Naive thymus-derived CD4-positive, alpha-beta T cell (primary cell): ENCODE measurements at regions of chr3 and their contacts with region 1.

Region 1: DNA sequence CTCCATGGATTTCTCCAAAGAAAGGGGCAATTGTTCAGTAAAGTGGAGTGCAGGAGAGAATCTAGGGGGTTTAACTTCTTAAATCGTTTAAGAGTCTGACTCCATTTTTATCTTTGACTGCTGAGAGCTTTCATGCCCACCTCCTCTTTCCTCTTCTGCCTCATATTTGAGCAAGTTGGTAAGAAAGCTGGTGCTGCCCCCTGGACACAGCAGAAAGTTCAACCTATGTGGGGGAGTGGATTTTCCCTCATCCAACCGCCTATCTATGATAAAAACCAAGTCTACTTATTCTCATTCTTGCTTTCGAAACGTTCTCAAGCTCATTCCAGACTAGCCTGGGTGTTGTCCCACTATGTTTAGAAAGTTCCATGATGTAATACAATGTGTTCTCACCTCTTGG is 26.0 kb downstream of the HHLA2 start:
- DNase-seq: peak in 5 of 9 donors; percentile 16 to 40 (median 36)
- ATAC-seq: no peak
- H3K4me3 ChIP-seq: no peak overlapping the region
- H3K4me3 Mint-ChIP-seq: no peak overlapping the region
- H3K27ac ChIP-seq: no peak overlapping the region
- H3K27ac Mint-ChIP-seq: no peak overlapping the region
- H3K4me1 ChIP-seq: no peaks in the 10 kb centered on the region
- H3K4me1 Mint-ChIP-seq: peaks cover 0 to 21% (median 5%) of the 10 kb centered on the region in 7 donors
- H3K27me3 ChIP-seq: no peaks in the 10 kb centered on the region
- H3K27me3 Mint-ChIP-seq: no peaks in the 10 kb centered on the region

Region 2: GRCh38 chr3:107753480-107753879 is 568.9 kb before region 1 on chr3:
- CTCF ChIA-PET with region 1: no interaction called
- POLR2A ChIA-PET with region 1: no interaction called
- intact Hi-C with region 1: loop called in 1 of 2 experiments (anchors 10 kb)
- DNase-seq: peak in 3 of 9 donors; percentile 4 to 23 (median 9)
- ATAC-seq: peak; percentile 50
- H3K4me3 ChIP-seq: no peak overlapping the region
- H3K4me3 Mint-ChIP-seq: no peak overlapping the region
- H3K27ac ChIP-seq: no peak overlapping the region
- H3K27ac Mint-ChIP-seq: peak overlapping the region in 1 of 9 donors; percentile 28
- H3K4me1 ChIP-seq: no peaks in the 10 kb centered on the region
- H3K4me1 Mint-ChIP-seq: peaks cover 0 to 11% (median 0%) of the 10 kb centered on the region in 7 donors
- H3K27me3 ChIP-seq: no peaks in the 10 kb centered on the region
- H3K27me3 Mint-ChIP-seq: no peaks in the 10 kb centered on the region

Region 3: GRCh38 chr3:107938143-107938542 is 384.2 kb before region 1 on chr3:
- CTCF ChIA-PET with region 1: no interaction called
- POLR2A ChIA-PET with region 1: no interaction called
- intact Hi-C with region 1: loop called in 1 of 2 experiments (anchors 1 kb)
- DNase-seq: peak in 4 of 9 donors; percentile 6 to 19 (median 8)
- ATAC-seq: no peak
- H3K4me3 ChIP-seq: no peak overlapping the region
- H3K4me3 Mint-ChIP-seq: no peak overlapping the region
- H3K27ac ChIP-seq: no peak overlapping the region
- H3K27ac Mint-ChIP-seq: no peak overlapping the region
- H3K4me1 ChIP-seq: peaks cover 0 to 4% of the 10 kb centered on the region in 2 donors
- H3K4me1 Mint-ChIP-seq: peaks cover 0 to 15% (median 8%) of the 10 kb centered on the region in 7 donors
- H3K27me3 ChIP-seq: no peaks in the 10 kb centered on the region
- H3K27me3 Mint-ChIP-seq: peaks cover 0 to 30% (median 0%) of the 10 kb centered on the region in 5 donors

Region 4: DNA sequence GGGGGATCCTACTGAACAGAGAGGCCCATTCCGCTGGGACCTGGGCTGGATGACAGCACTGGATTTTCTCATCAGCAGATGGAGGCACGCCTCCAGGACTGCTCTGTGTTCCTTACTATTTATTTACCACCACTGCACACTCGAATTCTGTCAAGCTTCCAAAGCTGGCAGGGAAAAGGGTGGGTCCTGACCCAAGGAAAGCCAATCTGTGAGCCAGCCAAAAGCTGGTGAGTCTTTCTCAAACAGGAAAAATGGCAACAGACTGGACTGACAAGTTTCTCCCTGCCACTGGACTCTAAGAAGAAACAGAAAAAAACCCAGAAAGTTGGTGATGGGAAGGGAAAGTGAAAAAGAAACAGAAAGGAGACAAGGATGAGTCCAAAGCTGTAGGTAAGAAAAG is 269.3 kb before region 1 on chr3:
- CTCF ChIA-PET with region 1: no interaction called
- POLR2A ChIA-PET with region 1: no interaction called
- intact Hi-C with region 1: loop called in 1 of 2 experiments (anchors 5 kb)
- DNase-seq: no peak
- ATAC-seq: no peak
- H3K4me3 ChIP-seq: no peak overlapping the region
- H3K4me3 Mint-ChIP-seq: no peak overlapping the region
- H3K27ac ChIP-seq: no peak overlapping the region
- H3K27ac Mint-ChIP-seq: peak overlapping the region in 7 of 9 donors; percentile 10 to 82 (median 77)
- H3K4me1 ChIP-seq: peaks cover 4 to 8% of the 10 kb centered on the region in 2 donors
- H3K4me1 Mint-ChIP-seq: peaks cover 31 to 68% (median 49%) of the 10 kb centered on the region in 7 donors
- H3K27me3 ChIP-seq: no peaks in the 10 kb centered on the region
- H3K27me3 Mint-ChIP-seq: no peaks in the 10 kb centered on the region

Region 5: DNA sequence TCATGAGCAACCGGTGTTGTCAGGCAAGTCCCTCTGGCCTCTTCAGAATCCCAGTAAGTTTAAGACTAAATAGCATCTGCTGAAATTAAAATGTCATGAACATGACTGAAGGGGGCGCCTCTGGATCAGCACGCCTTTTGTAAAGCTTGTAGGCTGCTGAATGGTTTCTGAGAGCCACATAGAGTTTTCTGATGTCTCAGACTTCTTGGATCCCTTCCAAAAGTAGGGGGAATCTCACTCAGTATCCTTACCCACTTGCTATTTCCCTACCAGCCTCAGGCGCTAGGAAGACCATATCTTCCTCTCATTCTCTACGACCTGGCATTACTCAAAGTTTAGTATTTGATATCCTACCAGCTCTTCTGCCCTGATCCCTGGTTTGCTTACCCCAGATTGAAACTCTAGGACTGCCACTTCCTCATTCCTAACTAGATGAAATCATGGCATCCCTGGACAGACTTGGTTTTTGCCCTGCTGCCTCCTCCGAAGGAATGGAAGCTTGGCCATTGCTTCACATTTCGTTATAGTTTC is 168.8 kb before region 1 on chr3:
- CTCF ChIA-PET with region 1: no interaction called
- POLR2A ChIA-PET with region 1: no interaction called
- intact Hi-C with region 1: loop called in 1 of 2 experiments (anchors 1 kb)
- DNase-seq: peak in 8 of 9 donors; percentile 36 to 64 (median 45)
- ATAC-seq: peak; percentile 73
- H3K4me3 ChIP-seq: no peak overlapping the region
- H3K4me3 Mint-ChIP-seq: no peak overlapping the region
- H3K27ac ChIP-seq: no peak overlapping the region
- H3K27ac Mint-ChIP-seq: peak overlapping the region in 1 of 9 donors; percentile 25
- H3K4me1 ChIP-seq: peaks cover 0 to 4% of the 10 kb centered on the region in 2 donors
- H3K4me1 Mint-ChIP-seq: peaks cover 0 to 21% (median 13%) of the 10 kb centered on the region in 7 donors
- H3K27me3 ChIP-seq: no peaks in the 10 kb centered on the region
- H3K27me3 Mint-ChIP-seq: no peaks in the 10 kb centered on the region

Region 6: GRCh38 chr3:108175352-108175751 is 147.0 kb before region 1 on chr3:
- CTCF ChIA-PET with region 1: no interaction called
- POLR2A ChIA-PET with region 1: no interaction called
- intact Hi-C with region 1: no loop called
- DNase-seq: no peak
- ATAC-seq: no peak
- H3K4me3 ChIP-seq: no peak overlapping the region
- H3K4me3 Mint-ChIP-seq: peak overlapping the region in 3 of 10 donors; percentile 1 to 12 (median 8)
- H3K27ac ChIP-seq: no peak overlapping the region
- H3K27ac Mint-ChIP-seq: peak overlapping the region in 1 of 9 donors; percentile 44
- H3K4me1 ChIP-seq: no peaks in the 10 kb centered on the region
- H3K4me1 Mint-ChIP-seq: peaks cover 8 to 60% (median 46%) of the 10 kb centered on the region in 7 donors
- H3K27me3 ChIP-seq: no peaks in the 10 kb centered on the region
- H3K27me3 Mint-ChIP-seq: no peaks in the 10 kb centered on the region